ENCODE measurements at regions of chr3 and their contacts with region 1.

Region 1: GRCh38 chr3:157201648-157202278 is 41.8 kb upstream of the CCNL1 start:
- DNase-seq: no peak
- H3K4me3 Mint-ChIP-seq: no peak overlapping the region
- H3K27ac Mint-ChIP-seq: no peak overlapping the region
- H3K4me1 Mint-ChIP-seq: no peaks in the 10 kb centered on the region
- H3K27me3 Mint-ChIP-seq: no peaks in the 10 kb centered on the region

Region 2: DNA sequence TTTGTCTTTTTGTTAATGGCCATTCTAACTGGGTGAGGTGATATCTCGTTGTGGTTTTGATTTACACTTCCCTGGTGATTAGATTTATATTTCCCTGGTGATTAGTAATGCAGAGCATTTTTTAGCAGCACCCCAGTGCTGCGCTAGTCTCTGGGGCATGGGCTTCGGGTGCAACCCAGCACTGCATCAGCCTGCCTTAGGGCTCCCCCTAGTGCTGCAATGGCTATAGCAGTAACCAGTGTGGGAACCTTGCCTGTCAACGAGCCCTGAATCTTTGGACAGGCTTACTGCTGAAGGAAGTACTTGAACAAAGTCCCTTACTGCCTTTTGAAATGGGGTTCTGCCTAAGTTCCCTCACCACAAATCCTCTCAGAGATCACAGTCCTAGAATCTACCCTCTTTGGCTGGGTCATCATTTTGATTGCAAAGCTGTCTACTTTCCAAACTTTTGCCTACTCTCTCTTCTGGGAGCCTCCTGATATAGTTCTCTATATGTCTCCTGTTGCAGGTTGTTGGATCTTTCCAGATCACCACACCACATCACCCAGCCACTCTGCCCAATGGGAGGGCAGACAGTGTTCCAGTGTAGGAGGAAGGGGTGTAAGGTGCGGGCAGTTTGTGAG is 37.4 kb after region 1 on chr3:
- CTCF ChIA-PET with region 1: interaction called, 11 read pairs
- POLR2A ChIA-PET with region 1: no interaction called
- intact Hi-C with region 1: loop called (anchors 1 kb)
- DNase-seq: peak; percentile 85
- H3K4me3 Mint-ChIP-seq: no peak overlapping the region
- H3K27ac Mint-ChIP-seq: no peak overlapping the region
- H3K4me1 Mint-ChIP-seq: peaks cover 3% of the 10 kb centered on the region
- H3K27me3 Mint-ChIP-seq: no peaks in the 10 kb centered on the region

Measured in activated CD4-positive, alpha-beta memory T cell treated with anti-CD3 and anti-CD28 coated beads for 36 hours (primary cell).